HEK293T (cell line): ENCODE measurements at regions of chr3 and their contacts with region 1.

Region 1: GRCh38 chr3:23916886-23917678 is at the starts of genes NKIRAS1 and RPL15:
- DNase-seq: peak; percentile 92

Region 2: DNA sequence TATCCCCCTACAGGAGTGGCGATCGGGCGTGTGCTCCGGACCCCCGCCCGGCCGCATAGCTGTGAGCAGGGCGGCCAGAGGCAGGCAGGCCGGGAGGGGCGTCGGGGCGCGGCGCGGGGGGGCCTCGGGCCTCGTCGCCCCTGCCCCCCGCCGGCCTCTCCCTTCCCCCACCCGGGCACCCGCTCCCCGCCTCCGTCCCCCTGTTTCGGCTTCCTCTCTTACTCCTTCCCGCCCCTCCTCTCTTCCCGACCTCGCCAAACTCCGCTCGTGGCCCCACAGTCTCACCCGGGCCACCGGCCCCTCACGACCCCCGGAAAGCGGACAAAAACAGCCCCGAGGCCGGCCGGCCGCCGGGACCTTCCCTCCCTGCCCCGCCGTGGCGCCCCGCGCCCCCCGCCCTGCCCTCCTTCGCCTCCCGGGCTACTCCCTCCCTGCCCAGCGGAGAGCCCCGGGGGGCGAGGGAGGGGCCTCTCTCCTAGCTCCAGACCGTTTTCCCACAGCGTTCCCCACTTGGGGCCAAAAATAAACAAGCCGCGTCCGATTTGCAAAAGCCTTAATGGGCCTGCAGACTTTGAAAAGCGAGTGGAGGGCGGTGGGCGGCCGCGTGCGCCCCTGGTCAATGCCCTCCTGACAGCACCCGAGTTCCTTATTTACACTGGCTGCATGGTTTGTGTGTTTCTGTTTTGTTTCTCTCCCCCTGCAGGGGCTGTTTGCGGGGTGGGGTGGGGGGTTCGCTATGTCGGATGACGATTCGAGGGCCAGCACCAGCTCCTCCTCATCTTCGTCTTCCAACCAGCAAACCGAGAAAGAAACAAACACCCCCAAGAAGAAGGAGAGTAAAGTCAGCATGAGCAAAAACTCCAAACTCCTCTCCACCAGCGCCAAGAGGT is 110.3 kb before region 1 on chr3:
- CTCF ChIA-PET with region 1: no interaction called
- POLR2A ChIA-PET with region 1: interaction called, 11 read pairs
- DNase-seq: peak; percentile 41

Region 3: GRCh38 chr3:23865595-23866450 is 51.3 kb before region 1 on chr3:
- CTCF ChIA-PET with region 1: no interaction called
- POLR2A ChIA-PET with region 1: interaction called, 13 read pairs
- DNase-seq: no peak

Region 4: DNA sequence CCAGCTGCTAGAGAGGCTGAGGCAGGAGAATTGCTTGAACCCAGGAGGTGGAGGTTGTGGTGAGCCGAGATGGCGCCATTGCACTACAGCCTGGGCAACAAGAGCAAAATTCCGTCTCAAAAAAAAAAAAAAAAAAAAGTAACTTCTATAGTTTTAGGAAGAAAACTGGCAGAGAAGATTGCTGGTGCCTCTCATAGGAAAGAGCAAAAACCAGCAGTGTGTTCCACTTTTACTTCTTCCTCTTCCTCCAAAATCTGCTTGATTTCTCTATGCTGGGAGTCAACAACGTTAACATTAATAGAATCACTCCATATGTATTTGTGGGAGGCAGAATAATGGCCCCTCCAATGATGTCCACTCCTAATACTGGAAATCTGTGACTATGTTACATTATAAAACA is 15.5 kb after region 1 on chr3:
- CTCF ChIA-PET with region 1: no interaction called
- POLR2A ChIA-PET with region 1: interaction called, 34 read pairs
- DNase-seq: no peak

Region 5: DNA sequence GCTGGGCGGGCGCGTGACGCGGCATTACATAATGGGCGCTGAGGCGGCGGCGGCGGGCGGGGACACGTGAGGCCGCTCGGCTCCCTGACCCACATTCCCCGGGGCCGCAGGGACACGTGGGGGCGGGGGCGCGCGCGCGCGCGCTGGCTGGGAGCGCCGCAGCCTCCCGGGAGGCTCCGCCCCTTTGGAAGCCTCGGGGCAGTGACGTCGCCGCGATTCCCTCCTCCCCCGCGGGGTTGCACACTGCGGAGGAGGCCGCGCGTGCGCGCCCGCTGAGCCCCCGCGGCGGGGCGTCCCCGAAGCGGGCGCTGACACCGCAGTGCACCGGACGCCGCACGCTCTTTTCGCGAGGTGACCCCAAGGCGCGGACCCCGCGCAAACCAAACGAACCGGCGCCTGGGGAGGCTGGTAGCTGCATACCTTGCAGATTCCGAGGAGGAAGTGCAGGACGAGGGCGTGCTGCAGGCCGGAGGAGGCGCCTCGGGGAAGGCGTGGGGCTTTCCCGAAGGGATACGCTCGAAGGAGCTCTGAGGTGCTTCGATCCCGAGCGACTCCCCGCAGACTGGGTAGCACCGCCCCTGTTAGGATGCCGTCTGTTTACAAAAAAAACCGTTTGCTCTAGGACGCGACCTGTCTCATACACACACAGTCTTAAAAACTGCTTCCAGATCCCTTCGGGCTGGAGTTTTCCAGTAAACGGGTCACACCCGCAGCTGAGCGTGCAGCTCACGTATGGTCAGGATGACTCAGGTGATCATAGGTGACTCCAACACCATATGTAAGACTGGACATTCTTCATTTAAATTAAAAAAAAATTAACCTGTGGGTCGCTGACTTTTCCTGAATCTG is 29.0 kb after region 1 on chr3:
- CTCF ChIA-PET with region 1: no interaction called
- POLR2A ChIA-PET with region 1: interaction called, 62 read pairs
- DNase-seq: peak; percentile 97

Region 6: GRCh38 chr3:23981955-23982354 is 64.9 kb after region 1 on chr3:
- CTCF ChIA-PET with region 1: no interaction called
- POLR2A ChIA-PET with region 1: interaction called, 12 read pairs
- DNase-seq: no peak

Region 7: DNA sequence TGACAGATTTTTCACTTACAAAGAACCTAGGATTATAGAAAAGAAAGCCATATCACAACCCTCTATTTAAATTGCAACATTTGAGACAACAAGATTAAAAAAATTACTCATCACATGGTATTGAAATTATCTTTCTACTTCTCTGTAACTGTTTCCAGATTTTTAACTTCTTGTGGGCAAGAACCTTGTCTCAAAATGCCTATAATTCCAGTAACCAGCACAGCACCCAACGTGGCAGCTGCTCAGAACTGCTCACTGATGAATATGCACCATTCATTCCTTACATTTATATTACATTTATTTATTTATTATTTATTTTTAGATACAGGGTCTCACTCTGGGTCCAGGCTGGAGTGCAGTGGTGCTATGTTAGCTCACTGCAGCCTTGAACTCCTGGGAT is 361.5 kb after region 1 on chr3:
- CTCF ChIA-PET with region 1: no interaction called
- POLR2A ChIA-PET with region 1: no interaction called
- DNase-seq: no peak